Left lung (tissue), 14 donors: ENCODE measurements at regions of chr3 and their contacts with region 1.

Region 1: DNA sequence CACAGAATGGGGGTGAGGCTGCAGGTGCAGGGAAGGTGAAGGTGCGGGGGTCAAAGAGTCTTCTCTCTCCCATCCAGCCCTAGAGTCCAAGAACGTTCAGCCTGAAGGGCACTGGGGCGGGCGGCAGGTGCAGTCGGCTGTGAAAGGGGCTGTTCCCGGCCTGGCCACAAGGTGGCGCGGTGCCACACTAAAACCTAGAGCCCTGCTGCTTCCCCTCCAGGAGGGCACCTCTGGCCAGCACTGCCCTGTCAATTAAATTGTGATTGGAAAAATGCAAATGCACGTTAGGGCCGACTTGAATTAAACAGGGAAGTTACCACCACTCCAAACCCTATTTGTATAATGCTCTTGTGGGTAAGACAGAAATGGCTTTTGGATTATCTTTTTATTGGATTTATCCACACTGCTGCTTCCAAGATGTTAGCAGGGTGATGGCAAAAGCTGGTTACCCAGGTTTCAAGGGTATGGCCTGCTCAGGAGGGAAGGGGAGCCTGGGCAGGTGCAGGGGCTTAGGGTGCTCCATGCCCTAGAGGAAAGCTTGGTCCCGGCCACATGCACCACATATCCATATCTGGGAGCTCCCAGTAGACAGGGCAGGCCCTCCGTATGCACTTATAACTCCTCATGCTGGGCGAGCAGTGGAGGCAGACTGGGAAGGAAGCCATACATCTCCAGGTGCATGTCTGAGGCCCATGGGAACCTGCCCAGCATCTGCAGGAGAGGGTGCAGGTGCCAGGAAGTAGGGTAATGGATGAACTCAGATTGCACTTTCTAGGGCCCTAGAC is 119.8 kb downstream of the ADCY5 start:
- DNase-seq: peak; percentile 59 to 93 (median 76)
- ATAC-seq: peak; percentile 96
- H3K4me3 ChIP-seq: no peak overlapping the region
- H3K27ac ChIP-seq: no peak overlapping the region
- H3K4me1 ChIP-seq: no peaks in the 10 kb centered on the region
- H3K27me3 ChIP-seq: peaks cover 0 to 5% of the 10 kb centered on the region in 2 donors
- CTCF ChIP-seq: peak; percentile 94 to 98

Region 2: GRCh38 chr3:123489400-123490004 is 160.5 kb after region 1 on chr3:
- intact Hi-C with region 1: loop called in 1 of 2 experiments (anchors 5 kb)
- DNase-seq: peak in 3 of 4 donors; percentile 49 to 79 (median 65)
- ATAC-seq: peak; percentile 93
- H3K4me3 ChIP-seq: no peak overlapping the region
- H3K27ac ChIP-seq: no peak overlapping the region
- H3K4me1 ChIP-seq: peaks cover 0 to 4% of the 10 kb centered on the region in 2 donors
- H3K27me3 ChIP-seq: peaks cover 0 to 5% of the 10 kb centered on the region in 2 donors
- CTCF ChIP-seq: peak; percentile 64 to 68